Natural killer cell (primary cell): ENCODE measurements at regions of chr2 and their contacts with region 1.

Region 1: GRCh38 chr2:112626604-112627059 is 19.1 kb upstream of the SLC20A1 start:
- DNase-seq: peak; percentile 58 to 84
- ATAC-seq: peak; percentile 35 to 59 (median 51)
- H3K4me3 ChIP-seq: no peak overlapping the region
- H3K4me3 Mint-ChIP-seq: peak overlapping the region; percentile 78
- H3K27ac ChIP-seq: peak overlapping the region; percentile 59
- H3K27ac Mint-ChIP-seq: peak overlapping the region; percentile 90 to 94
- H3K4me1 ChIP-seq: peaks cover 82% of the 10 kb centered on the region
- H3K4me1 Mint-ChIP-seq: peaks cover 80 to 82% of the 10 kb centered on the region in 2 donors
- H3K27me3 ChIP-seq: no peaks in the 10 kb centered on the region
- H3K27me3 Mint-ChIP-seq: no peaks in the 10 kb centered on the region
- CTCF ChIP-seq: peak; percentile 82

Region 2: DNA sequence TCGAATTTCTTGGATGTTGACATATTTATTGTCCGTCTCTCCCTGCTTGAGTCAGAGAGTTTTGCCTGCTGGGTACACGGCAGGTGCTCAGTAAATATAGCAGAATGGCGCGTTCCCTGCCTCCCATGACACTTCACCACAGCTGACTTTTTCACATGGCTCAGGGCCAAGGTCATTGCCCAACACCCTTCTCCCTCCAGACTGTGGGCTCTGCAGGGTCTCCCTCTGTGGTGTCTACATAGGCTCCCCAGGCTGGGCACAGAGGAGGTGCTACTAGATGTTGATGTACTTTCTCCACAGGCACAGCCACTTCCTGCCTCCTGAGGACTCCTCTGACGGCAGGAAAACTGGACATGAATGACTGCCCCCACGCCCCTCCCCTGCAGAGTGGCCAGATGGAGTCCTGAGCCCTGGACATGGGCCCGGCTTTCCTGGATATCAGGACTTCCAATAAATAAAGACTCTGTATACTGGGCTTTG is 38.0 kb before region 1 on chr2:
- intact Hi-C with region 1: no loop called
- DNase-seq: no peak
- ATAC-seq: no peak
- H3K4me3 ChIP-seq: no peak overlapping the region
- H3K4me3 Mint-ChIP-seq: no peak overlapping the region
- H3K27ac ChIP-seq: no peak overlapping the region
- H3K27ac Mint-ChIP-seq: no peak overlapping the region
- H3K4me1 ChIP-seq: peaks cover 24% of the 10 kb centered on the region
- H3K4me1 Mint-ChIP-seq: peaks cover 26 to 35% of the 10 kb centered on the region in 2 donors
- H3K27me3 ChIP-seq: no peaks in the 10 kb centered on the region
- H3K27me3 Mint-ChIP-seq: no peaks in the 10 kb centered on the region
- CTCF ChIP-seq: no peak

Region 3: GRCh38 chr2:112645310-112646101 is 18.9 kb after region 1 on chr2 and contains the start of gene SLC20A1:
- intact Hi-C with region 1: loop called (anchors 2 kb)
- DNase-seq: peak; percentile 98 to 99
- ATAC-seq: peak; percentile 91 to 99 (median 91)
- H3K4me3 ChIP-seq: peak within 1 kb of the TSS; percentile 95
- H3K4me3 Mint-ChIP-seq: peak within 1 kb of the TSS; percentile 94
- H3K27ac ChIP-seq: peak within 1 kb of the TSS; percentile 90
- H3K27ac Mint-ChIP-seq: peak within 1 kb of the TSS; percentile 89 to 91
- H3K4me1 ChIP-seq: peaks cover 41% of the 10 kb centered on the region
- H3K4me1 Mint-ChIP-seq: peaks cover 77 to 80% of the 10 kb centered on the region in 2 donors
- H3K27me3 ChIP-seq: no peaks in the 10 kb centered on the region
- H3K27me3 Mint-ChIP-seq: no peaks in the 10 kb centered on the region
- CTCF ChIP-seq: peak; percentile 59
- total RNA-seq, gene SLC20A1: 193 to 241 (median 233) TPM